B cell (primary cell): ENCODE measurements at regions of chr10 and their contacts with region 1.

Region 1: GRCh38 chr10:87771871-87772500 is 46.0 kb downstream of the ATAD1 start:
- DNase-seq: peak; percentile 23
- ATAC-seq: no peak
- H3K4me3 ChIP-seq: no peak overlapping the region
- H3K4me3 Mint-ChIP-seq: no peak overlapping the region
- H3K27ac ChIP-seq: no peak overlapping the region
- H3K27ac Mint-ChIP-seq: no peak overlapping the region
- H3K4me1 ChIP-seq: no peaks in the 10 kb centered on the region
- H3K4me1 Mint-ChIP-seq: peaks cover 2% of the 10 kb centered on the region
- H3K27me3 ChIP-seq: no peaks in the 10 kb centered on the region
- H3K27me3 Mint-ChIP-seq: no peaks in the 10 kb centered on the region
- CTCF ChIP-seq: peak; percentile 75

Region 2: GRCh38 chr10:87531908-87532622 is 239.9 kb before region 1 on chr10:
- CTCF ChIA-PET with region 1: no interaction called
- POLR2A ChIA-PET with region 1: no interaction called
- intact Hi-C with region 1: loop called (anchors 2 kb)
- DNase-seq: no peak
- ATAC-seq: no peak
- H3K4me3 ChIP-seq: no peak overlapping the region
- H3K4me3 Mint-ChIP-seq: no peak overlapping the region
- H3K27ac ChIP-seq: no peak overlapping the region
- H3K27ac Mint-ChIP-seq: no peak overlapping the region
- H3K4me1 ChIP-seq: no peaks in the 10 kb centered on the region
- H3K4me1 Mint-ChIP-seq: no peaks in the 10 kb centered on the region
- H3K27me3 ChIP-seq: no peaks in the 10 kb centered on the region
- H3K27me3 Mint-ChIP-seq: no peaks in the 10 kb centered on the region
- CTCF ChIP-seq: no peak

Region 3: DNA sequence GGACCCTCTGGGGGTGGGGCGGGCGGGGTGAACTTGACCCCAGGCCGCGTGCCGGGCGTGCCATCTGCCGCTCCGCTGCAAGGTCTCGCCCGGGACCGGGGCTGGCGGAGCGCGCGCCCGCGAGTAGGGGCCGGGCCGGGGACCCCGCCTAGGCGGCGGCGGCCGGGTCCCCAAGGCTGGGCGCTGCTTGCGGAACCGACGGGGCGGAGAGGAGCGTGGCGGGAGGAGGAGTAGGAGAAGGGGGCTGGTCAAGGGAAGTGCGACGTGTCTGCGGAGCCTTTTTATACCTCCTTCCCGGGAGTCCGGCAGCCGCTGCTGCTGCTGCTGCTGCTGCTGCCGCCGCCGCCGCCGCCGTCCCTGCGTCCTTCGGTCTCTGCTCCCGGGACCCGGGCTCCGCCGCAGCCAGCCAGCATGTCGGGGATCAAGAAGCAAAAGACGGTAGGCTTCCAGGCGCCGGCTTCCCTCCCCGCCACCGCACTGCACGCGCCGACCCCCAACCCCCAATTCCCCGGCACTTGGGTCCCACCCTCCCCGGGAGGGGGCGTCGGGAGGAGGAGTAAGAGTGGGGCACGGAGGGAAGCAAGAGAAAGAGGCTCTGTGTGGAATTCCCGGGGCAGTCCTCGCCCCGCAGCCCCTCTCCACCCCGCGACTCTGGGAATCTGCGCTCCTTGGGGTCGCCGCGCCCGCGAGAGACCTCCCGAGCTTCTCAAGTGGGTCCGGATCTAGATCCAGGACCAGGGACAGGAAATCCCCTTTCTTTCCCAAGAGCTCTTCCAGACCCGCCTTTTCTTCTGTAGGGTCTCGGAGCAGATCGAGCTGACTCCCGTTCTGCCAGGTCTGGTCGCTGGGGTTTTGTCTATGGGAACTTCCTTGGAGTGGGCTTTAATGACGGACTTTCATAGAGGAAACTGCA is 112.2 kb before region 1 on chr10 and contains the start of gene PAPSS2:
- CTCF ChIA-PET with region 1: no interaction called
- POLR2A ChIA-PET with region 1: no interaction called
- intact Hi-C with region 1: loop called (anchors 5 kb)
- DNase-seq: peak; percentile 39
- ATAC-seq: peak; percentile 33
- H3K4me3 ChIP-seq: peak within 1 kb of the TSS; percentile 29 to 61 (median 52)
- H3K4me3 Mint-ChIP-seq: peak within 1 kb of the TSS; percentile 85
- H3K27ac ChIP-seq: no peak within 1 kb of the TSS
- H3K27ac Mint-ChIP-seq: no peak within 1 kb of the TSS
- H3K4me1 ChIP-seq: peaks cover 8 to 12% of the 10 kb centered on the region in 2 donors
- H3K4me1 Mint-ChIP-seq: peaks cover 14% of the 10 kb centered on the region
- H3K27me3 ChIP-seq: peaks cover 0 to 31% (median 22%) of the 10 kb centered on the region in 4 experiments
- H3K27me3 Mint-ChIP-seq: peaks cover 45% of the 10 kb centered on the region
- CTCF ChIP-seq: no peak
- total RNA-seq, gene PAPSS2: not detected in 2 replicates